ENCODE measurements at regions of chr7 and their contacts with region 1.

Region 1: DNA sequence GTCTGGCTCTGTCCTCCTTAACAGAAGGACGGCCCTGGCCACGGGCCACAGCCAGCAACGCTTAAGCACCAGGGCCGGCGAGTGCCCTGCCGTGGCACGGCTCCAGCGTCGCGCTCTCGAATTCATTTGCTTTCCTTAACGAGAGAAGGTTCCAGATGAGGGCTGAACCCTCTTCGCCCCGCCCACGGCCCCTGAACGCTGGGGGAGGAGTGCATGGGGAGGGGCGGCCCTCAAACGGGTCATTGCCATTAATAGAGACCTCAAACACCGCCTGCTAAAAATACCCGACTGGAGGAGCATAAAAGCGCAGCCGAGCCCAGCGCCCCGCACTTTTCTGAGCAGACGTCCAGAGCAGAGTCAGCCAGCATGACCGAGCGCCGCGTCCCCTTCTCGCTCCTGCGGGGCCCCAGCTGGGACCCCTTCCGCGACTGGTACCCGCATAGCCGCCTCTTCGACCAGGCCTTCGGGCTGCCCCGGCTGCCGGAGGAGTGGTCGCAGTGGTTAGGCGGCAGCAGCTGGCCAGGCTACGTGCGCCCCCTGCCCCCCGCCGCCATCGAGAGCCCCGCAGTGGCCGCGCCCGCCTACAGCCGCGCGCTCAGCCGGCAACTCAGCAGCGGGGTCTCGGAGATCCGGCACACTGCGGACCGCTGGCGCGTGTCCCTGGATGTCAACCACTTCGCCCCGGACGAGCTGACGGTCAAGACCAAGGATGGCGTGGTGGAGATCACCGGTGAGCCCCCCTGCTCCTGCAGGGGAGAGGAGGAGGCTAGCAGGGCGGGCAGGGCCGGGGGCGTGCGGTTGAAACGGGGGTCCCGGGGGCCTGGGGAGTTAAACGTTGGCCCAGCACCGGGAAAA is at the start of gene HSPB1:
- DNase-seq: peak; percentile 79
- ATAC-seq: peak; percentile 67
- H3K4me3 ChIP-seq: peak within 1 kb of the TSS; percentile 86 to 94
- H3K27ac ChIP-seq: peak within 1 kb of the TSS; percentile 95
- H3K4me1 ChIP-seq: peaks cover 45 to 75% of the 10 kb centered on the region in 2 experiments
- H3K27me3 ChIP-seq: no peaks in the 10 kb centered on the region
- CTCF ChIP-seq: no peak
- POLR2A ChIP-seq: peak; percentile 86
- RAD21 ChIP-seq: no peak
- total RNA-seq, gene HSPB1: 524 TPM

Region 2: DNA sequence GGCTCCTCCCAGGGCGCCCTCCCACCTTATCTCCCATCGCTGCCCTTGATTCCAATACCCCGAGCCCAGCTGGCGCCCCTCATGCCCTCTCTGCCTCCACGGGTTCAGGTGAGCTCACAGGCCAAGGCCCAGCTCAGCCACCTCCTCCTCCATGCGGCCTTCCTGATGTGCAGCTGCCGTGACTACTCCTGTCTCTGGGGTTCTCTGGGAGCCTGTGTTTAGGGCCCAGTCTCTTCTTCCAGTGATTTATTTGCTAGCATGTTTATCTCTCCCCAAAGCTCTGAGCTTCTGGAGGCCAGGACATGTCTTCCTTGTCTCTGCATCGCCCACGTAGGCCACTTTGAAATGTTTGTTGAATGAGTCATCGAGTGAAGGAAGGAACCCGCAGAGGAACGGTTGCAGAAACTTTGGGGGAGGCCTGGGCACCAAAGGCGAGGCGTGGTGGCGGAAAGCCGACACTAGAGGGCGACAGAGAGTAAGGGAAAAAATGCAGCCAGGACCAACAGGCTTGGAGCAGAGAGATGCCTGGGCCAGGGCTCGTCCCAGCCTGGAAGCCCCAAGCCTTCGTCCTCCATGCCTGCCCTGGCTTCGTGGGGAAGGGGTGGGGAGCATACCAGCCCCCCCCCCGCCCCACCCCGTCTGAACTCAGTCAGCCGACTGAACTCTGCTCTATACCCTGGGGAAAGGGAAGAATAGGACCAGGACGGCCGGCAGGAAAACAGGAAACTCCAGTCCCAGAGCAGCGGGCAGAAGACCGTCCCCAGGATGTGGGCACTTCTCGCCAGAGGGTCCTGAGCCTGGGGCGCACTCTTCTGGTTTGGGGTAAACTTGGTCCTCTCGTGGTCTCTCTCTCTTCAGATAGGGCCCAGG is 11.0 kb before region 1 on chr7:
- CTCF ChIA-PET with region 1: interaction called, 3 read pairs
- POLR2A ChIA-PET with region 1: interaction called, 21 read pairs
- RAD21 ChIA-PET with region 1: interaction called in 1 of 2 experiments, 4 read pairs
- intact Hi-C with region 1: loop called (anchors 1 kb)
- DNase-seq: peak; percentile 95
- ATAC-seq: peak; percentile 77
- H3K4me3 ChIP-seq: peak overlapping the region; percentile 43 to 45
- H3K27ac ChIP-seq: peak overlapping the region; percentile 99
- H3K4me1 ChIP-seq: peaks cover 65 to 80% of the 10 kb centered on the region in 2 experiments
- H3K27me3 ChIP-seq: no peaks in the 10 kb centered on the region
- CTCF ChIP-seq: peak in 2 of 3 experiments; percentile 95 to 97; a peak in 4 of 6 replicates
- POLR2A ChIP-seq: no peak
- RAD21 ChIP-seq: no peak

Measured in HCT116 (cell line).